GM13977 (cell line): ENCODE measurements at regions of chr19 and their contacts with region 1.

Region 1: GRCh38 chr19:18058208-18059030 is 28.3 kb downstream of the IL12RB1 start:
- DNase-seq: peak; percentile 89
- CTCF ChIP-seq: peak; percentile 86

Region 2: DNA sequence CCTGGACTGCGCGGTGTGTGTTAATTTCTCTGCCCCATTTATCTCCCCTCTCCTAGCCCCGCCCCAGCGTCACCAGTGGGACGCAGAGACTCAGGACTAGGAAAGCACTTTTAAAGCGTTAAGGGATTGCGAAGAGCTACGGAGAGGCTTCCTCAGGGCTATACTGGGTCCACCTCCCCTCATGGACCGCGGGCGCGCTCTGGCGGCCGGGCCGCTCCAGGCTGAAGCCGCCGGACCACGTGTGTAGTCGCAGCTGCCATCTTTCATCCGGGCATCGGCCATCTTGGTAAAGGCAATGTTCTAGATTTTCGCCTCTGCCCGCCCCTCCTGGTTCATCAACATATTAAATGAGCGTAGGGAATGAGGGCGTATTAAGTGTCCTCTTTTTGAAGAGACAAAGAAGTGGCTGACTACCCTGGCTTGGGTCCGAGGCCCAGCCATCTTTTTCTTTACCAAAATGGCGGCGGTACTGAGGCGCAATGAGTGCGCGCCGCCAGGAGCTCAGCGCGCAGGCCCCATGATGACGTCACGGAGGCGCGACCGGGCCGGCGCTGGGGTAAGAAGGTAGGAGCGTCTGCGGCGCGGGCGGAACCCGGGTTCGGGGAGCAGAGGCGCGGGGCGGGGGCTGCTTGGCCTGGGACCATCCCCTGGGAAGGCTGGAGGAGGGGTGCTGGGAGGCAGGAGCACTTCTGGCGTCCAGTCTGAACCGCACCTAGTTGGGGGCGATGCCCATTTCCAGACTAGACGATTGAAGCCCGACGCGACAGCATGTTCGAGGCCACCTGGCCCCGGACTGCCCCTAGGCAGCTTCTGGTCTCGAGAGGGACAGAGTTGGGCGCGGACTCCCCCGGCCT is 125.7 kb before region 1 on chr19 and contains the start of gene CCDC124:
- in situ Hi-C with region 1: loop called (anchors 25 kb)
- DNase-seq: peak; percentile 92
- CTCF ChIP-seq: peak; percentile 99

Region 3: GRCh38 chr19:18007044-18007916 is 51.1 kb before region 1 on chr19:
- in situ Hi-C with region 1: loop called (anchors 5 kb)
- DNase-seq: peak; percentile 91
- CTCF ChIP-seq: peak; percentile 99

Region 4: DNA sequence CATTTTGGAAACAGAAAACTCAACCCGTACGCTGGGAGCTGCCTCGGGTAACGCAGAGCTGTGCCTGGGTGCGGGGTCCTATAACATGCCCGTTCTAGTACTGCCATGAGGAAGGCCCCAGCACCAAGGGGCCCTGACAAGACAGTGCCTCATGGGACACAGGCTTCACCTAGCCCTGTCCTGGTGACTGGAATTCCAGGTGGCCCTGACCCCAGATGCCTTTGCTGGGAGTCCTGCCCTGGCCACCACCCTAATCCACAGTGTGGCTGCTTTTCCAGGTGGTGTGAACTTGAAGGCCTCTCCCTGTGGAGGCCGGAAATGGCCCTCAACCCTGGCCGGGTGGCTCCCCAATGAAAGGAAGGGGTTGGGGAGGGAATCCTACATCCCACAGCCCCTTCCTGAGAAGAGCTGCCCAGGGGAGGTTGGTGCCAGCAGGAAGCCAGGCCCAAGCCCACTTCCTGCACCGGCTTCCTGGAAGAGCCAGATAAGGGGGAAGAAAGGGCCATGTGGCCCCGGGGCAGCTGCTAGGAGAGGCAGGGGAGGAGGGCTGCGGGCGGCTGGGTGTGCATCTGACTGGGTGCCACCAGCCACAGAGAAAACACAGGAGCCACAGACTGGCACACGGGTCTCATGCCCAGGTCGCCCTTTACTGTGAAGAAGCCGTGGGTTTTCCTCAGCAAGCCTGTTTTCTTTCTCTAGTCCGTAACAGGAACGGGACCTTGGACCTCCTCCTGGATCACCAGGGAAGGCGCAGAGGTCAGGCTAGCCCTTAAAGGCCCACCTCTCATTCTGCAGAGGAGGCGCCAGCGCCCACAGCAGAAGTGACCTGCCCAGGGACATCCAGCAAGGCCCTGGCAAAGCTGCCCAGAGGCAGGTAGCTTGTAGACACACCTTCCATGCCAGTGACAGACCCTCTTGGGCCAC is 259.8 kb after region 1 on chr19:
- in situ Hi-C with region 1: no loop called
- DNase-seq: no peak
- CTCF ChIP-seq: no peak